GM18951 (cell line): ENCODE measurements at regions of chr2 and their contacts with region 1.

Region 1: GRCh38 chr2:42095923-42096408 is 48.1 kb downstream of the PKDCC start:
- POLR2A ChIP-seq: no peak

Region 2: DNA sequence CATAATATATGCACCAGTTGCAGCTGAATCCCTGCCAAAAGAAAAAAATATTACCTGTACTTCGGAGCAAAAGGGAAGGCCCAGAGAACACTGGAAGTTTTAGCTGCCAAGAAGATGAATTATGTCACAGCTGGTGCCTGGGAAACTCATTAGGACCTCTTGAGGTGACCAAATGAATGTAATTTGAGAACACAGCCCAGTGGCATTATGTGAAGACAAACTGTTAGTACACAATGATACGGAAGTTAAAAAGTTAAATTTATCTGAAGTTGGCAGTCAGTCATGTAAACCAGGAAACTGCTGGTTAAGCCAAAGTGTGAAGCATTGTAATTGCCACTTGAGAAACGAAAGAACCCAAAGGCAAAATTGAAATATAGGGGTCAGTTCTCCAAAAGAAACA is 153.9 kb after region 1 on chr2:
- in situ Hi-C with region 1: loop called (anchors 10 kb)
- POLR2A ChIP-seq: no peak

Region 3: DNA sequence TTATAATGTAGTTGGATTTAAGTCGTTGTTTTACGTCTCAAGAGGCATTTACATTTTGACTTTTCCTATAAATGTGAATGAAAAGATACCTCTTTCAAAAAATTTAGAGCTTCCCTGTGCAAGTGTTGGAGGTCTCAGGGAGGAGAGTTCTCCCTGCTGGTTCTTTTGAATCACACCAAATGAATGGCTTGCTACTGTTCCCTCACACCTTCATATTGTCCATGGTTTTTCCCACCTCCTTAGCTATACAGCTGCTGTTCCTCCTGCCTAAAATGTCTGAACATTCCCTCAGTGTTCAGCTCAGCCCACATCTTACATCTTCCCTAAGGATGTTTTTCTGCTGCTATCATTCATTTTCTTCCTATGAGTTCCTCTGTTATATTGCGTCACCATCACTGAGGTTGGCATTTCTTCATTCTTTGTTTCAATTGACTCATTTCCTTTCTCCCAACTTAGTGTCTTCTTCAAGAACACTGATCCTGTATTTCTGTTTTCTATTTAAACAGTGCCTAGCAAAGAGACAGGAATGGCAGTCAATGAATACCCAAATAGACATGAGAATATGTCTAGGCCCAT is 219.0 kb after region 1 on chr2:
- in situ Hi-C with region 1: loop called (anchors 10 kb)
- POLR2A ChIP-seq: no peak